ENCODE measurements at regions of chr5 and their contacts with region 1.

Region 1: GRCh38 chr5:74640450-74640953 is at the start of gene ENC1:
- DNase-seq: peak; percentile 80 to 90
- H3K4me3 ChIP-seq: peak within 1 kb of the TSS; percentile 84
- H3K27ac ChIP-seq: peak within 1 kb of the TSS; percentile 98
- H3K4me1 ChIP-seq: peaks cover 54% of the 10 kb centered on the region
- H3K27me3 ChIP-seq: no peaks in the 10 kb centered on the region
- CTCF ChIP-seq: no peak; the same call in 1 of the 2 replicates
- total RNA-seq, gene ENC1: 38.8 and 53.6 TPM in 2 replicates

Region 2: DNA sequence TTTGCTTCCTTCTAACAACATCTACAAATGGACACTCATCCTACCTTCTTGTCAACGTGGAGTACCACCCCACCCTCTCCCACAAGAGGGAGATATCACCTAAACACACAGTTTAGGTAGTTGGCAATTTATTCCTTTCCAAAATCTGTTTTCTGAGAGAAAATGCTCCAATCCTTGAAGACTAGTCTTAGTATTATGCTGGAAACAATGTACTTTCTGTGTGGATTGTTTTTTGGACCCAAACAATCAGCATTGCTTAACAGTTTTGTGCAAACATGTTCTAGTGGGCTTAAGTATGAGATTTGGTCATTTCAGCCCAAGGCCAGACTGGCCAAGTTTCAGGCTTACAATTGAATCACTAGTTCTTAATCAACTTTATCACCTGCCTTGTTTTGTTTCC is 655.4 kb before region 1 on chr5:
- CTCF ChIA-PET with region 1: no interaction called
- POLR2A ChIA-PET with region 1: no interaction called
- intact Hi-C with region 1: loop called (anchors 1 kb)
- DNase-seq: peak; percentile 25 to 46
- H3K4me3 ChIP-seq: no peak overlapping the region
- H3K27ac ChIP-seq: no peak overlapping the region; the same call in 1 of the 2 replicates
- H3K4me1 ChIP-seq: no peaks in the 10 kb centered on the region; the same call in 1 of the 2 replicates
- H3K27me3 ChIP-seq: no peaks in the 10 kb centered on the region
- CTCF ChIP-seq: peak; percentile 73

Region 3: DNA sequence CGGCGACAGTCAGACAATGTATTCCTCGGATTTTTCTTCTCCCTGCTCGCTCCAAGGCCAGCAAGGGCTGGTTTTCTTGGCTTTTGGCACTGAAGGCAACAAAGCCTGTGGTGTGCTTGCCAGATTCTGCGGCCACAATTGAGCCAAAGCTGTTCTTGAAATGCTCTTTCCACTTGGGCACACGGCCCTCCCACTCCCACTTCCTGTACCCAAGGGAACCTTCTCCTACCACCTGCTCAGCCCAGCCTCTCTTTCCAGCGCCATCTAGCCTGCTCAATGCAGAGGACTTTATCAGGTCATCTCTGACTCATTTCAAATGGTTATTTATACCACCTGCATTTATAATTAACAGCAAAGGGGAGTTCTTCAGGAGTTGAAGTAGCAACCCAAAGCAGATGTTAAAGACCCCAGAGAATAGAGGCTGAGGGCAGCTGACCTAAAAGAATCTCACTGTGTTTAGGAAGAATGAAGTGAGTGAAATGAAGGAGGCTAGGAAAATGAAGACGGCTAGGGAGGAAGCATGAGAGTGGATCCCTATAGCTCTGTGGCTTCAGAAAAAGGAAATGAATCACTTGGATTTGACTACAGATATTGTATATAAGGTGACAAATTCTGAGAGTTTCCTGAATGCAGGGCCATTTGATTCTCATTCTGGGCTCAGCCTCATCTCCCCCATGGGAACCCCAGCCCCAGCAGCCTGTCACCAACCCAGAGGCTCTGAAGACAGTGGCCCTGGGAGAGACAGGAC is 439.0 kb before region 1 on chr5:
- CTCF ChIA-PET with region 1: no interaction called
- POLR2A ChIA-PET with region 1: no interaction called
- intact Hi-C with region 1: loop called (anchors 2 kb)
- DNase-seq: peak; percentile 61 to 81
- H3K4me3 ChIP-seq: peak overlapping the region; percentile 29; the same call in 1 of the 2 replicates
- H3K27ac ChIP-seq: peak overlapping the region; percentile 91
- H3K4me1 ChIP-seq: peaks cover 44% of the 10 kb centered on the region
- H3K27me3 ChIP-seq: no peaks in the 10 kb centered on the region
- CTCF ChIP-seq: no peak

Region 4: GRCh38 chr5:74272024-74272775 is 368.3 kb before region 1 on chr5:
- CTCF ChIA-PET with region 1: no interaction called
- POLR2A ChIA-PET with region 1: interaction called, 3 read pairs
- intact Hi-C with region 1: loop called (anchors 2 kb)
- DNase-seq: peak; percentile 59 to 80
- H3K4me3 ChIP-seq: no peak overlapping the region
- H3K27ac ChIP-seq: peak overlapping the region; percentile 71
- H3K4me1 ChIP-seq: peaks cover 22% of the 10 kb centered on the region
- H3K27me3 ChIP-seq: no peaks in the 10 kb centered on the region
- CTCF ChIP-seq: no peak

Region 5: DNA sequence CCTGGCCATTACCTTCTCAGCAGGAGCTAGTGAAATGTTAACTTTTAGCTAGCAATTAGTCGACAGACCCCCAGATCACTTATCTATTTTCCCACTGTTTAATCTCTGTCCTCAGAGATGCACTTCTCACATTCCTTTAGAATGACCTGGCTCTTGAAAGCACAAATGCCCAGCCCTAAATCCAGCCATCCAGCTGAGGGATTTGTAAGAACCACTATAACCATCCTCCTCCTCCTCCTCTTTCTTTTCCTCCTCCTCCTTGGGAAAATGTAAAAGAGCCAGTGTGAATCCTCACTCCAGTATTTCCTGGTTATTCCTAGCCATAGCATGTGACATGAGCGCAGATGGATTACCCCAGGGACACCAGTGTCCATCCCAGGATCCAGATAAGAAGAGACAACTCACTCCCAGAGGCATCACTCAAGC is 124.3 kb before region 1 on chr5:
- CTCF ChIA-PET with region 1: interaction called, 10 read pairs
- POLR2A ChIA-PET with region 1: interaction called, 7 read pairs
- intact Hi-C with region 1: loop called (anchors 2 kb)
- DNase-seq: no peak
- H3K4me3 ChIP-seq: no peak overlapping the region
- H3K27ac ChIP-seq: no peak overlapping the region
- H3K4me1 ChIP-seq: peaks cover 36% of the 10 kb centered on the region
- H3K27me3 ChIP-seq: no peaks in the 10 kb centered on the region
- CTCF ChIP-seq: no peak

Region 6: GRCh38 chr5:74625742-74626241 is 14.7 kb before region 1 on chr5:
- CTCF ChIA-PET with region 1: no interaction called
- POLR2A ChIA-PET with region 1: interaction called, 9 read pairs
- intact Hi-C with region 1: loop called (anchors 2 kb)
- DNase-seq: no peak
- H3K4me3 ChIP-seq: no peak overlapping the region
- H3K27ac ChIP-seq: peak overlapping the region; percentile 94
- H3K4me1 ChIP-seq: peaks cover 88% of the 10 kb centered on the region
- H3K27me3 ChIP-seq: no peaks in the 10 kb centered on the region
- CTCF ChIP-seq: peak; percentile 48

Measured in PC-9 (cell line).